A673 (cell line): ENCODE measurements at regions of chr6 and their contacts with region 1.

Region 1: GRCh38 chr6:146700078-146700686 is 101.4 kb downstream of the ADGB start:
- DNase-seq: peak; percentile 87
- H3K4me3 ChIP-seq: no peak overlapping the region
- H3K27ac ChIP-seq: no peak overlapping the region
- H3K4me1 ChIP-seq: no peaks in the 10 kb centered on the region
- H3K27me3 ChIP-seq: no peaks in the 10 kb centered on the region
- CTCF ChIP-seq: peak; percentile 78

Region 2: GRCh38 chr6:145929037-145929633 is 771.0 kb before region 1 on chr6:
- CTCF ChIA-PET with region 1: no interaction called
- POLR2A ChIA-PET with region 1: no interaction called
- intact Hi-C with region 1: loop called (anchors 10 kb)
- DNase-seq: peak; percentile 61
- H3K4me3 ChIP-seq: no peak overlapping the region
- H3K27ac ChIP-seq: no peak overlapping the region
- H3K4me1 ChIP-seq: no peaks in the 10 kb centered on the region
- H3K27me3 ChIP-seq: no peaks in the 10 kb centered on the region
- CTCF ChIP-seq: peak; percentile 81

Region 3: GRCh38 chr6:146246034-146246433 is 454.1 kb before region 1 on chr6:
- CTCF ChIA-PET with region 1: no interaction called
- POLR2A ChIA-PET with region 1: no interaction called
- intact Hi-C with region 1: no loop called
- DNase-seq: no peak
- H3K4me3 ChIP-seq: no peak overlapping the region
- H3K27ac ChIP-seq: no peak overlapping the region
- H3K4me1 ChIP-seq: no peaks in the 10 kb centered on the region
- H3K27me3 ChIP-seq: no peaks in the 10 kb centered on the region
- CTCF ChIP-seq: no peak

Region 4: DNA sequence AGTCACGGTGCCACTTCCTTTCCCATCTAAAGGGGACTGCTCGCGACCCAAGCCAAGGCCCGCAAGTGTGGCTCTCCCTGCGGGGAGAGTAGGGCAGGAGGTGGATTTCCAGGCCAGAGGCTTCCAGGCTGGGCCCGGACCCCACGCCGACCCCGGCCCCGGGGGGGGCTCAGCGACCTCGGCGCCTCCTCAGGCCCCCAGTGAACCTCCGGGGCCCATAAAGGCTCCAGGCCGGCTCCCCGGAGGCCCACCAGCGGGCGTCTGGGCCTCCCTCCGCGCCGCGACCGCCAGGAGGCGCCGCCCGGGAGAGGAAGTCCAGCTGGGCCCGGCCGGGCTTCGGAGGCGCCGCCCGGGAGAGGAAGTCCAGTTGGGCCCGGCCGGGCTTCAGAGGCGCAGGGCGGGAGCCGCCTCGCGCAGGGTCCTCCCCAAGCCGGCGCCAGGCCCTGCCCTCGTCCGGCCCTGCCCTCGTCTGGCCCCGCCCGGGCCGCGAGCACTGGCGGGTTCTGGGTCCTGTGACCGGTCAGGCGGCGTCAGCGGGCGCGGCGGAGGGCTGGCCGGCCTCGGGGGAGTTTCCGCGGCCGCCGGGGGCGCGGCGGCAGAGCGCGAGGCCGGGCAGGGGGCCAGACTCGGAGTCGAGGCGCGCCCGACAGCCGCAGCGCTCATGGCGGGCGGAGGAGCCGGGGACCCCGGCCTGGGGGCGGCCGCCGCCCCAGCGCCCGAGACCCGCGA is 156.8 kb before region 1 on chr6 and contains the start of gene RAB32:
- CTCF ChIA-PET with region 1: no interaction called
- POLR2A ChIA-PET with region 1: no interaction called
- intact Hi-C with region 1: loop called (anchors 5 kb)
- DNase-seq: peak; percentile 40
- H3K4me3 ChIP-seq: peak within 1 kb of the TSS; percentile 35
- H3K27ac ChIP-seq: no peak within 1 kb of the TSS
- H3K4me1 ChIP-seq: no peaks in the 10 kb centered on the region
- H3K27me3 ChIP-seq: no peaks in the 10 kb centered on the region
- CTCF ChIP-seq: peak; percentile 48
- total RNA-seq, gene RAB32: 2.0 and 2.6 TPM in 2 replicates

Region 5: GRCh38 chr6:146923205-146923833 is 223.1 kb after region 1 on chr6:
- CTCF ChIA-PET with region 1: no interaction called
- POLR2A ChIA-PET with region 1: no interaction called
- intact Hi-C with region 1: no loop called
- DNase-seq: no peak
- H3K4me3 ChIP-seq: no peak overlapping the region
- H3K27ac ChIP-seq: no peak overlapping the region
- H3K4me1 ChIP-seq: no peaks in the 10 kb centered on the region
- H3K27me3 ChIP-seq: no peaks in the 10 kb centered on the region
- CTCF ChIP-seq: no peak